GM13976 (cell line): ENCODE measurements at regions of chr1 and their contacts with region 1.

Region 1: DNA sequence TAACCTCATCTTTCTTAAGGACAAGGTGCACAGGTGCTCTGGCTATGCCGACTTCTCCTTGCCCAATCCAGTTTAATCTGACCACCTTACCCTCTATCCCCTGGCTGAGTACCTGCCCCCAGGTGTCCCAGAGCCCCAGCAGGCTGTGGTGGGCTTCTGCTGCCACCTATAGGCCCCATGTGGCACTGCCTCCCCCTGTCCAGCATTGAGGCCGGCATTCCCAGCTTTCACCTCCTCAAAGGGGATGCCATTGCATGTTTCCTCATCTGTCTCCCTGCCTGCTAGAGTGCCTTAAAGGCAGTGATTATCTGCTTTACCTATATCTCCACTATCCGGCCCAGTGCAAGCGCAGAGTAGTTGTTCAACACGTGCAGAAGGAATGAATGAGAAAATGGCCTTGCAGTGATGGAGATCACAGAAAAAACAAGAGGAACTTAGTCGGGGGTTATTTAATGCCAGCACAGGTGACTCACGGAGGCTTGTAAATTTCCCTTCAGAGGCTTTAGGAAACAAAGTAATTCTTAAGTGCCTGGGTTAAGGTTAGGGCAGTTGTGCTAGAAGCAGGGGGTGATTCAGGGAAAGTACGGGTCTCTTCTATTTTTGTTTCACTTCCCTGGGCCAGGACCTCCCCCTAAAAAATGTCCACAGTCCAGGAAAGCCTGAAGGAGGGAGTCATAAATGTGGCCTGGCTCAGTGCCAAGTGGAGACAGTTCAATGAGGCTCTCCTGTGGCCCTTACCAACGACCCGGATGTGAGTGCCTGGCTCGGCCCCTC is 131.8 kb upstream of the NGF start:
- DNase-seq: peak; percentile 57
- CTCF ChIP-seq: peak; percentile 75

Region 2: DNA sequence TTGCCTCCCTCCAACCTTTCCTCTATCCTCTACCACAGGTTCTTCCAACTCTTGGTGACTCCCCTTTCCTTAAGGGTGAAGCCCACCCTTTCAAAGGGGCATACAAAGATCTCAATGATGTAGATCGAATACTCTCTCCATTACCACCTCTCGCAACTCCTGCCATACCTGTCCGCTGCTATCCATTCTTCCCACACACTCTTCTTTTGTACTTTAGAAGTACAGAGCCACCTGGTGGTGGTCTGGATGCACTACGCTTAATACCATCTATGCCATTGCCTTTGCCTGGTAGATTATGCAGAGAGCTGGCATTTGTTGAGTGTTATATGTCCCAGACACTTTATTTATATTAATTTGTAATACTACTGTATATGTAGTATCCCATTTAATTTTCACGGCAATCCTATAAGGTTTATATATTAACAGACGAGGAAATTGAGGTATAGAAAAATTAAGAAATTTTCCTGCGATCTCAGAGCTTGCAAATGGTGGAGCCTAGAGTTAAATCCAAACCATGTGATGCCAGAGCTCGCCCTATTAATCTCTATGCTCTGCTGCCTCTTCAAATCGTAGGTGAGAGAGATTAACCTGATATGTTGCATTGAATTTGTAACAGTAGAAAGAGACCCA is 417.3 kb before region 1 on chr1:
- in situ Hi-C with region 1: no loop called
- DNase-seq: peak; percentile 59
- CTCF ChIP-seq: peak; percentile 76

Region 3: GRCh38 chr1:115275212-115275611 is 194.7 kb before region 1 on chr1:
- in situ Hi-C with region 1: loop called (anchors 25 kb)
- DNase-seq: no peak
- CTCF ChIP-seq: peak; percentile 24